Mammary epithelial cell (primary cell): ENCODE measurements at regions of chr15 and their contacts with region 1.

Region 1: DNA sequence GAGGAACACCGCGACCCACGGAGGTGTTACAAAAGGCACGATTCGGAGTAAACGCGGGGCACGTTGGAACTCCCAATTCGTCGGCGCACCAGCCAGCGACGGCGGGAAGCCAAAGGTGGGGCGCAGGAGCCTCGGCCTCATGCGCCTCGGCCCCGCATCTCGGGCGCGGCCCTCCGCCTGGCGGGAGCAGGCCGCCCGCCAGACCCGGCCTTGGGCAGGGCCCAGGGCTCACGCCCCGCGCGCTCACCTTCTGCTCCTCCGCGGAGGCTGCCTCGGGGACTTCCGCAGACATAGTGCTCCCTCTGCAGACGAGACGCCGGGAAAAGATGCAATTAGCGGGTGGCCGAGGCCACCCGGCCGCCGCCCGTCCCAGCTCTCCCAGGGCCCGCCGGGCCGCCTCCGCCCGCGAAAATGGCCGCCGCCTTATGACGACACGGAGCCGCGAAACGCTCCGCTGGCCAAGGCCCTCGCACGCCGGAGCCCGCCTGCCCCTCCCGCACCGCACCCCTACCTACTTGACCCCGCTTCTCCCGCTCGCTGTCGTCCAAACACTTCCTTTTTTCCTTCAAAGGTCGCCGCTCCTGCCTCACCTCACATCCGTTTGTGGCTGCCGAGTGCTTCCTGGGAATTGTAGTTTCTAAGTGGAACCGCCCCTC is at the start of gene ARPP19:
- DNase-seq: peak; percentile 93
- H3K4me3 ChIP-seq: peak within 1 kb of the TSS; percentile 71 to 76 (median 74)
- H3K27ac ChIP-seq: peak within 1 kb of the TSS; percentile 93
- H3K4me1 ChIP-seq: peaks cover 5% of the 10 kb centered on the region
- H3K27me3 ChIP-seq: no peaks in the 10 kb centered on the region
- CTCF ChIP-seq: peak in 1 of 2 donors; percentile 31
- total RNA-seq, gene ARPP19: 153 to 200 TPM

Region 2: GRCh38 chr15:52331490-52332240 is 237.1 kb before region 1 on chr15:
- CTCF ChIA-PET with region 1: no interaction called
- dilution Hi-C with region 1: no loop called
- in situ Hi-C with region 1: no loop called
- intact Hi-C with region 1: loop called (anchors 2 kb)
- DNase-seq: peak; percentile 75
- H3K4me3 ChIP-seq: no peak overlapping the region
- H3K27ac ChIP-seq: no peak overlapping the region
- H3K4me1 ChIP-seq: peaks cover 25% of the 10 kb centered on the region
- H3K27me3 ChIP-seq: no peaks in the 10 kb centered on the region
- CTCF ChIP-seq: peak; percentile 65 to 66

Region 3: DNA sequence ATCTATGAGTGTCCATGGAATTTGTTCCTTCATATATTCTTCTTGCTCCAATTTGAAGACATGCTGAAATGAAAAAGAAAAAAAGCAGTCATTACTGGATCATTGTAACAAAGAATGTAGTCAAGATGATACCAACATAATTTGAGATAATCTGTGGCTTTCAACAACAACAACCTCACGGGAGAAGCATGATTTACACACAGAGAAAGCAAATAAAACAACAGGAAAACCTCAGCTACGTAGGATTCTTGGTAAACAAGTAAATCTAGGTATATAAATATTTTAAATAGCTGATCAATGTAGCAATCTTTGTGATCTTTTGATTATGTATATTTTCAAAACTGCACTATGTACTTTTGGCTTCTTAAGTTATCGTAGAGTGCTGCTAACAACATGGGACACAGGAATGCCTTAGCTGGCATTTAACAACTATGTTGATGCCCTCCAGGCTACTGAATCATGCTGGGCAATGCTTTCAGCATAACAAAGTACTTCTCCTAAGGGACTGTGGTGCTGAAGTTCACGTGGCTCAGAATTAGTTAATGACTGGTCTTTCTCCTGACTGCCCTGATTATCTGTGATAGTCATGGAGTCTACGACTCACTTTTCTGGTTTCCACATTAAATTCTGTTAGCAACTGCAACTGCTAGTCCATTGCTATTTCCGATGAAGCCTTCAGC is 176.6 kb before region 1 on chr15:
- CTCF ChIA-PET with region 1: no interaction called
- dilution Hi-C with region 1: no loop called
- in situ Hi-C with region 1: no loop called
- intact Hi-C with region 1: loop called (anchors 5 kb)
- DNase-seq: peak; percentile 82
- H3K4me3 ChIP-seq: no peak overlapping the region
- H3K27ac ChIP-seq: no peak overlapping the region
- H3K4me1 ChIP-seq: peaks cover 5% of the 10 kb centered on the region
- H3K27me3 ChIP-seq: no peaks in the 10 kb centered on the region
- CTCF ChIP-seq: no peak

Region 4: DNA sequence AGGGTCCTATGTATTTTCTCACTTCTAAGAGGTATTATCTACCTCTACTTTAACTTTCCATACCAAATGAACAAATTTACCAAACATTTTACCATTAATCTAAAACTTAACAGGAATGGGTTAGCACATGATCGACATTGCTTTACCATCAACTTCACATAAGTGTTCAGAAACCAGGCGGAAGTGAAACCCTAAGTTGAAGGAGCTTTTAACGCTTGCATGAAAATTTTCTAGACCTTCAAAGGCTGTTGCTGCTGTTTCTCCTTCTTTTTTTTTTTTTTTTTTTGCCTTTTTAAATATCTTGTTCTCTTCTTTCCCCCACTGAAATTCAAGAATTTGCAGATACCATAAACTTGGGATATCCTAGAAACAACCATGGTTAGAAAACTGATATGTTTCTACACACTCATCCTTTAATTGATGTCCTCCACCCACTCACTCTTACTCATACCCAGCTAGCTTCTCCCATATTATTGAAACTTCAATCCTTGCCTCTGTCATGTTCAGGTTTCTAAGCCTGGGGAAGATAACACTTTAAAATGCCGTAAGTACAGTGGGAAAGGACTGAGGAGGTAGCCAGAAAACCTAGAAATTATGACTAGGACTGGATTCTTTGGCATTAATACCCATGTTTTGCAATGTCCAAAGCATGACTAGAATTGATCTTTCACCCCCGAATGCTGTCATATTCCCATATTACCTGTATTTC is 64.8 kb before region 1 on chr15:
- CTCF ChIA-PET with region 1: no interaction called
- dilution Hi-C with region 1: loop called (anchors 10 kb)
- in situ Hi-C with region 1: no loop called
- intact Hi-C with region 1: no loop called
- DNase-seq: peak; percentile 83
- H3K4me3 ChIP-seq: no peak overlapping the region
- H3K27ac ChIP-seq: peak overlapping the region; percentile 53
- H3K4me1 ChIP-seq: peaks cover 21% of the 10 kb centered on the region
- H3K27me3 ChIP-seq: no peaks in the 10 kb centered on the region
- CTCF ChIP-seq: no peak

Region 5: GRCh38 chr15:52615284-52615683 is 46.6 kb after region 1 on chr15:
- CTCF ChIA-PET with region 1: no interaction called
- dilution Hi-C with region 1: no loop called
- in situ Hi-C with region 1: no loop called
- intact Hi-C with region 1: no loop called
- DNase-seq: no peak
- H3K4me3 ChIP-seq: no peak overlapping the region
- H3K27ac ChIP-seq: no peak overlapping the region
- H3K4me1 ChIP-seq: no peaks in the 10 kb centered on the region
- H3K27me3 ChIP-seq: no peaks in the 10 kb centered on the region
- CTCF ChIP-seq: no peak

Region 6: GRCh38 chr15:52679232-52680040 is 110.7 kb after region 1 on chr15 and contains the start of gene ATOSA:
- CTCF ChIA-PET with region 1: no interaction called
- dilution Hi-C with region 1: no loop called
- in situ Hi-C with region 1: no loop called
- intact Hi-C with region 1: loop called (anchors 1 kb)
- DNase-seq: peak; percentile 88
- H3K4me3 ChIP-seq: peak within 1 kb of the TSS; percentile 67 to 99 (median 95)
- H3K27ac ChIP-seq: peak within 1 kb of the TSS; percentile 83
- H3K4me1 ChIP-seq: peaks cover 4% of the 10 kb centered on the region
- H3K27me3 ChIP-seq: no peaks in the 10 kb centered on the region
- CTCF ChIP-seq: peak in 1 of 2 donors; percentile 18
- total RNA-seq, gene ATOSA: 14.4 to 25.3 TPM